ENCODE measurements at regions of chr7 and their contacts with region 1.

Region 1: GRCh38 chr7:29479301-29480200 is 84.1 kb upstream of the PRR15 start:
- DNase-seq: no peak
- ATAC-seq: no peak
- H3K4me3 ChIP-seq: no peak overlapping the region
- H3K27ac ChIP-seq: peak overlapping the region; percentile 43
- H3K4me1 ChIP-seq: peaks cover 70% of the 10 kb centered on the region
- H3K27me3 ChIP-seq: no peaks in the 10 kb centered on the region
- CTCF ChIP-seq: no peak
- EP300 ChIP-seq: no peak
- POLR2A ChIP-seq: no peak
- RAD21 ChIP-seq: no peak

Region 2: GRCh38 chr7:29328811-29329210 is 150.7 kb before region 1 on chr7:
- CTCF ChIA-PET with region 1: no interaction called
- POLR2A ChIA-PET with region 1: no interaction called
- in situ Hi-C with region 1: no loop called
- intact Hi-C with region 1: no loop called
- DNase-seq: no peak
- ATAC-seq: no peak
- H3K4me3 ChIP-seq: no peak overlapping the region; a peak in 1 of 6 replicates
- H3K27ac ChIP-seq: peak overlapping the region; percentile 52
- H3K4me1 ChIP-seq: peaks cover 54% of the 10 kb centered on the region
- H3K27me3 ChIP-seq: no peaks in the 10 kb centered on the region
- CTCF ChIP-seq: no peak
- EP300 ChIP-seq: no peak
- POLR2A ChIP-seq: no peak
- RAD21 ChIP-seq: no peak

Region 3: GRCh38 chr7:29401769-29402168 is 77.8 kb before region 1 on chr7:
- CTCF ChIA-PET with region 1: no interaction called
- POLR2A ChIA-PET with region 1: no interaction called
- in situ Hi-C with region 1: no loop called
- intact Hi-C with region 1: no loop called
- DNase-seq: no peak
- ATAC-seq: no peak
- H3K4me3 ChIP-seq: no peak overlapping the region
- H3K27ac ChIP-seq: no peak overlapping the region
- H3K4me1 ChIP-seq: peaks cover 29% of the 10 kb centered on the region
- H3K27me3 ChIP-seq: no peaks in the 10 kb centered on the region
- CTCF ChIP-seq: no peak
- EP300 ChIP-seq: no peak
- POLR2A ChIP-seq: no peak
- RAD21 ChIP-seq: no peak

Region 4: GRCh38 chr7:29449569-29450271 is 29.8 kb before region 1 on chr7:
- CTCF ChIA-PET with region 1: no interaction called
- POLR2A ChIA-PET with region 1: interaction called, 24 read pairs
- in situ Hi-C with region 1: no loop called
- intact Hi-C with region 1: no loop called
- DNase-seq: peak; percentile 66
- ATAC-seq: peak; percentile 85
- H3K4me3 ChIP-seq: no peak overlapping the region
- H3K27ac ChIP-seq: peak overlapping the region; percentile 25
- H3K4me1 ChIP-seq: peaks cover 33% of the 10 kb centered on the region
- H3K27me3 ChIP-seq: no peaks in the 10 kb centered on the region
- CTCF ChIP-seq: no peak
- EP300 ChIP-seq: no peak
- POLR2A ChIP-seq: no peak
- RAD21 ChIP-seq: no peak

Region 5: GRCh38 chr7:29684787-29685650 is 205.5 kb after region 1 on chr7:
- CTCF ChIA-PET with region 1: no interaction called
- POLR2A ChIA-PET with region 1: no interaction called
- in situ Hi-C with region 1: no loop called
- intact Hi-C with region 1: loop called (anchors 5 kb)
- DNase-seq: peak; percentile 56
- ATAC-seq: peak; percentile 95
- H3K4me3 ChIP-seq: peak overlapping the region; percentile 74 to 81 (median 77); a peak in 5 of 6 replicates
- H3K27ac ChIP-seq: peak overlapping the region; percentile 84
- H3K4me1 ChIP-seq: no peaks in the 10 kb centered on the region
- H3K27me3 ChIP-seq: no peaks in the 10 kb centered on the region
- CTCF ChIP-seq: no peak; the same call in 1 of the 2 replicates
- EP300 ChIP-seq: no peak
- POLR2A ChIP-seq: peak in 1 of 2 experiments; percentile 24; a peak in 1 of 4 replicates
- RAD21 ChIP-seq: 0 out of 2 replicates have a peak, but pooled peaks have one; percentile 9

Measured in HepG2 (cell line).